ENCODE measurements at regions of chr14 and their contacts with region 1.

Region 1: GRCh38 chr14:61475316-61475715 is 153.9 kb downstream of the PRKCH start:
- DNase-seq: peak in 1 of 2 experiments; percentile 74
- H3K4me3 ChIP-seq: no peak overlapping the region
- H3K27ac ChIP-seq: peak overlapping the region; percentile 94
- H3K4me1 ChIP-seq: peaks cover 92% of the 10 kb centered on the region
- H3K27me3 ChIP-seq: no peaks in the 10 kb centered on the region
- CTCF ChIP-seq: peak; percentile 90

Region 2: GRCh38 chr14:61456720-61457119 is 18.6 kb before region 1 on chr14:
- CTCF ChIA-PET with region 1: no interaction called
- POLR2A ChIA-PET with region 1: no interaction called
- intact Hi-C with region 1: no loop called
- DNase-seq: peak; percentile 65 to 72
- H3K4me3 ChIP-seq: no peak overlapping the region
- H3K27ac ChIP-seq: no peak overlapping the region
- H3K4me1 ChIP-seq: peaks cover 13% of the 10 kb centered on the region
- H3K27me3 ChIP-seq: no peaks in the 10 kb centered on the region
- CTCF ChIP-seq: peak; percentile 94

Region 3: DNA sequence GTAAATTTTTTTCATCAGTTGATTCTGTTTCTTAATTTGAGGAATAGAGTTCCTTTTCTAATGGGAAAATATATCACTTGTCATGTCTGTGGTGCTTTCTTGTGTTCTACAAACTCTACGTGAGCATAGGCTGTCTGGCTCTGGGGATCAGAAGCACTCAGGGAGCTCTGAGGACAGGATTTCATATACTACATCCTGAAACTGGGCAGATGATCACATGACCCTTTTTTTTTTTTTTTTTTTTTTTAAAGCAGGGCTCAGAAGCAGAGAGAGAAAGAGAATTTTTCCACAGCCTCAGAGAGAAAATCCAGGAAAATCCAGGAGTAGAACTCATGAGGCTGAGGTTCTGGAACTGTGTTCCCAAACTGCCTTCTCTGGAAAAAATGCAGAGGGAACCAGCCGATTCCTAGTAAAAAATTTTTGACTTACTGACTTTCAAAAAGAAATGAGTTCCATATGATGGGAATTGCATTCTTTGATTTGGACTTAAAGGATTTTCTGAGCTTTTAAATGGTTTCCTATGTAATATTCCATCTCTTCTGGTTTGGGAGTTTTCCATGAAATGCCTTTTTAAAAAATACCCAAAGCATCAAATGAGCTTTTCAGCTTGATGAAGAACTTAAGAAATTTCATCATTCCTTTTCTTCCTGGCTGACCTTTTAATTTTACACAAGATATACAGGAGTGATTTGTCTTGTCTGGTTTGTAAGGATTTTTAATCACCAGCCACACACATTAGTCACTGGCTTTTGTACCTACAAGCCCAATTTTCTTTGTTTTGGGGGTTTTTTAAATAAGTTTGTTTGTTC is 36.9 kb after region 1 on chr14:
- CTCF ChIA-PET with region 1: no interaction called
- POLR2A ChIA-PET with region 1: interaction called, 10 read pairs
- intact Hi-C with region 1: loop called (anchors 2 kb)
- DNase-seq: peak in 1 of 2 experiments; percentile 24
- H3K4me3 ChIP-seq: no peak overlapping the region
- H3K27ac ChIP-seq: peak overlapping the region; percentile 30
- H3K4me1 ChIP-seq: peaks cover 54% of the 10 kb centered on the region
- H3K27me3 ChIP-seq: no peaks in the 10 kb centered on the region
- CTCF ChIP-seq: no peak

Region 4: DNA sequence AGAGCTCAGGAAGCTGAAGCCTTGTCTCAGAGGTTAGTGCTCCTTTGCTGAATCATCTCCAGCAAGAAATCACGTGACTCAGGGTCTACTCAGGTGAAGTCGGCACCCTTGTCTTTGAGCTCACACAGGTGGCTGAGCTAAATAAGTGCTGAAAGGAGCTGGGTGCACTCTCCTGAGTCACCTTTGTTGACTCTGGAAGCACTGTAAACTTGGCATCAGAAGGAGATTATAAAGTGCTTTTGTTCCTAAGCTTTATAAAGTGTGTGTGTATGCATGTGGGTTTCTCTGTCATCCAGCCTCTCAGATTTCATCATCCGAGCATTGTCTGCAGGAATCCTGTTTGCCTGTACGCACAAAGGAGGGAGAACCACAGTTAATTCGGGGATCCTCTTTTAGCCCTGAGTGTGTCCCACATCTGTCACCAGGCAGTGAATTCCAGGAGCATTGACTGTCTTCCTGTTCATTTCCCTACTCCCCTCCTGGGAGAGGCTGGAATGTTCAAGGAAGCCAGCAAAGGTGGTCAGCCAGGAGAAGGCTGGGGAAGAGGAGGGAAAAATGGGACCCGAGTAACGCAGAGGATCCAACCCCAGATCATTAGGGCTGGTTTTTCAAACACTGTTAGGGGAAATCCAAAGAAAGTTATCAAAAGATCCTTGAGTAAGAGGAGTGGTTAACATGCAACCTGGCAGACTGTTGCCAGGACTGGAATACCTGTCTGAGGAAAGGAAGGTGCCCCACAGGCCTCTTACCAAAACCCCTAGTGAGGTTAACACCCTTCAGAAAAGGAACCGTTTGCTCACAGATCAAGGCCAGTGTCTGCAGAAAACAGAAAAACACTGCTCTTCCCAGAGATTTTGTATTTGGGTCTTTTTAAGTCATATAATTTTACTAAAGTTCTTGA is 62.5 kb after region 1 on chr14:
- CTCF ChIA-PET with region 1: no interaction called
- POLR2A ChIA-PET with region 1: interaction called, 3 read pairs
- intact Hi-C with region 1: loop called (anchors 1 kb)
- DNase-seq: peak; percentile 81 to 100
- H3K4me3 ChIP-seq: peak overlapping the region; percentile 35; the same call in 1 of the 2 replicates
- H3K27ac ChIP-seq: peak overlapping the region; percentile 98
- H3K4me1 ChIP-seq: peaks cover 62% of the 10 kb centered on the region
- H3K27me3 ChIP-seq: no peaks in the 10 kb centered on the region
- CTCF ChIP-seq: no peak

Region 5: GRCh38 chr14:61694830-61695694 is 219.7 kb after region 1 on chr14 and contains the start of gene HIF1A:
- CTCF ChIA-PET with region 1: no interaction called
- POLR2A ChIA-PET with region 1: interaction called, 5 read pairs
- intact Hi-C with region 1: loop called (anchors 1 kb)
- DNase-seq: peak; percentile 98
- H3K4me3 ChIP-seq: peak within 1 kb of the TSS; percentile 85
- H3K27ac ChIP-seq: peak within 1 kb of the TSS; percentile 93
- H3K4me1 ChIP-seq: peaks cover 28% of the 10 kb centered on the region
- H3K27me3 ChIP-seq: no peaks in the 10 kb centered on the region
- CTCF ChIP-seq: no peak
- total RNA-seq, gene HIF1A: 146 and 154 TPM in 2 replicates

Region 6: GRCh38 chr14:61730756-61731373 is 255.5 kb after region 1 on chr14:
- CTCF ChIA-PET with region 1: interaction called, 6 read pairs
- POLR2A ChIA-PET with region 1: no interaction called
- intact Hi-C with region 1: loop called (anchors 1 kb)
- DNase-seq: no peak
- H3K4me3 ChIP-seq: no peak overlapping the region
- H3K27ac ChIP-seq: peak overlapping the region; percentile 35
- H3K4me1 ChIP-seq: no peaks in the 10 kb centered on the region
- H3K27me3 ChIP-seq: no peaks in the 10 kb centered on the region
- CTCF ChIP-seq: peak; percentile 73